ENCODE measurements at regions of chr6 and their contacts with region 1.

Region 1: GRCh38 chr6:30616811-30617564 is at the start of gene PPP1R10:
- DNase-seq: peak; percentile 95 to 100 (median 97)
- ATAC-seq: peak; percentile 76
- H3K4me3 ChIP-seq: peak within 1 kb of the TSS; percentile 91 to 96
- H3K4me3 Mint-ChIP-seq: peak within 1 kb of the TSS; percentile 100
- H3K27ac ChIP-seq: peak within 1 kb of the TSS; percentile 99 to 100
- H3K27ac Mint-ChIP-seq: peak within 1 kb of the TSS; percentile 100
- H3K4me1 ChIP-seq: peaks cover 43% of the 10 kb centered on the region
- H3K4me1 Mint-ChIP-seq: peaks cover 45% of the 10 kb centered on the region
- H3K27me3 ChIP-seq: no peaks in the 10 kb centered on the region
- H3K27me3 Mint-ChIP-seq: no peaks in the 10 kb centered on the region
- CTCF ChIP-seq: no peak
- total RNA-seq, gene PPP1R10: 85.5 to 95.4 TPM

Region 2: GRCh38 chr6:29737707-29738630 is 879.0 kb before region 1 on chr6:
- CTCF ChIA-PET with region 1: no interaction called
- POLR2A ChIA-PET with region 1: no interaction called
- intact Hi-C with region 1: no loop called
- DNase-seq: peak; percentile 45 to 87 (median 75)
- ATAC-seq: peak; percentile 89
- H3K4me3 ChIP-seq: no peak overlapping the region
- H3K4me3 Mint-ChIP-seq: no peak overlapping the region
- H3K27ac ChIP-seq: no peak overlapping the region
- H3K27ac Mint-ChIP-seq: no peak overlapping the region
- H3K4me1 ChIP-seq: no peaks in the 10 kb centered on the region
- H3K4me1 Mint-ChIP-seq: peaks cover 16% of the 10 kb centered on the region
- H3K27me3 ChIP-seq: no peaks in the 10 kb centered on the region
- H3K27me3 Mint-ChIP-seq: no peaks in the 10 kb centered on the region
- CTCF ChIP-seq: peak; percentile 67

Region 3: DNA sequence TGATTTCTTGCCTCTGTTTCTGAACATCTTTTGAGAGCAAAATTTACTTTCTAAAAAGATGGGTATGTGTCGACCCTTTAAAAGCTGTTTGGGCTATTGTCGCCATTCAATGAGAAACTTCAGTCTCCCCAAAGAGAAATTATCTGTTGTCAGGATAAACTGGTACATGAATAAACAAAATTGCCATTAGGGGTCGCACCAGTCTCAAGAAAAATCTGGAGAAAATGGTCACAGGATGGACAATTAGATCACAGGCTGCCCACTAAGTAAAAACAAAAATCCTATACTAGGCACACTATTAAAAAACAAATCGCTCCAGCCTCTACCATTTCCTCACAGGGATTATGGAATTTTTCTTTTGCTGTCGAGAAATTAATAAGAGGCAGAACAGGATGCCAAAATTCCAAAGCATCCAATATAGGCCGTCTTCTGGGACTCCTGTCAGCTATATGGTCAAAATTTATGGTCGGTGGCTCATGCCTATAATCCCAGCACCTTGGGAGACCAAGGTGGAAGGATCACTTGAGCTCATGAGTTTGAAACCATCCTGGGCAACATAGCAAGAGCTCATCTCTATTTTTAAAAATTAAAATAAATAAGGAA is 133.2 kb before region 1 on chr6:
- CTCF ChIA-PET with region 1: interaction called, 11 read pairs
- POLR2A ChIA-PET with region 1: interaction called, 6 read pairs
- intact Hi-C with region 1: no loop called
- DNase-seq: peak in 3 of 9 experiments; percentile 45 to 76 (median 68)
- ATAC-seq: no peak
- H3K4me3 ChIP-seq: no peak overlapping the region
- H3K4me3 Mint-ChIP-seq: no peak overlapping the region
- H3K27ac ChIP-seq: no peak overlapping the region
- H3K27ac Mint-ChIP-seq: no peak overlapping the region
- H3K4me1 ChIP-seq: peaks cover 21% of the 10 kb centered on the region
- H3K4me1 Mint-ChIP-seq: peaks cover 34% of the 10 kb centered on the region
- H3K27me3 ChIP-seq: peaks cover 10 to 19% of the 10 kb centered on the region in 2 experiments
- H3K27me3 Mint-ChIP-seq: peaks cover 27% of the 10 kb centered on the region
- CTCF ChIP-seq: peak; percentile 91

Region 4: GRCh38 chr6:30541515-30542403 is 75.2 kb before region 1 on chr6:
- CTCF ChIA-PET with region 1: interaction called, 25 read pairs
- POLR2A ChIA-PET with region 1: interaction called, 56 read pairs
- intact Hi-C with region 1: loop called in 1 of 2 experiments (anchors 1 kb)
- DNase-seq: peak; percentile 59 to 92 (median 82)
- ATAC-seq: peak; percentile 69
- H3K4me3 ChIP-seq: peak overlapping the region; percentile 42 to 66
- H3K4me3 Mint-ChIP-seq: peak overlapping the region; percentile 88
- H3K27ac ChIP-seq: peak overlapping the region; percentile 50 to 72
- H3K27ac Mint-ChIP-seq: peak overlapping the region; percentile 97
- H3K4me1 ChIP-seq: peaks cover 34% of the 10 kb centered on the region
- H3K4me1 Mint-ChIP-seq: peaks cover 34% of the 10 kb centered on the region
- H3K27me3 ChIP-seq: no peaks in the 10 kb centered on the region
- H3K27me3 Mint-ChIP-seq: no peaks in the 10 kb centered on the region
- CTCF ChIP-seq: peak; percentile 99

Region 5: DNA sequence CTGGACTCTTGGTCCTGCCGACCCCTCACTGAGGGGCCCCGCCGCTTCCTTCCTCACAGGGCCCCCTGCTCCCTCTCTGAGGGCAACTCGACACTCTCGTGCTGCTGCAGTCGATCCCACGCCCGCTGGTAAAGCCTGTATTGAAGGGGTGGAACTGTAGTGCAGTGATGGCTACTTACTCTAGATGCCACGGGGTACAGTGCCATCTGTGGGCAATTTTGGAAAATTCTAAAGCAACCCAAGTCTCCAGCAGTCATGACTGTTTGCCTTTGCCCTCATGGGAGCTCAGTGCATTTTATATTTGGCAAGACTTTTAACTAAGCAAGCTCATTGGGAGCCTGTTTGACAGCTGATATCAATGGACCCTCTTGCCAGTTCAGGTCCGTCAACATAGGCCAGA is 23.5 kb after region 1 on chr6:
- CTCF ChIA-PET with region 1: interaction called, 4 read pairs
- POLR2A ChIA-PET with region 1: interaction called, 17 read pairs
- intact Hi-C with region 1: no loop called
- DNase-seq: peak in 3 of 9 experiments; percentile 15 to 41 (median 25)
- ATAC-seq: peak; percentile 84
- H3K4me3 ChIP-seq: no peak overlapping the region
- H3K4me3 Mint-ChIP-seq: no peak overlapping the region
- H3K27ac ChIP-seq: peak overlapping the region in 1 of 2 experiments; percentile 3
- H3K27ac Mint-ChIP-seq: peak overlapping the region; percentile 69
- H3K4me1 ChIP-seq: peaks cover 22% of the 10 kb centered on the region
- H3K4me1 Mint-ChIP-seq: peaks cover 23% of the 10 kb centered on the region
- H3K27me3 ChIP-seq: no peaks in the 10 kb centered on the region
- H3K27me3 Mint-ChIP-seq: no peaks in the 10 kb centered on the region
- CTCF ChIP-seq: no peak

Region 6: GRCh38 chr6:30717042-30717844 is 100.3 kb after region 1 on chr6 and contains the start of gene MDC1:
- CTCF ChIA-PET with region 1: interaction called, 22 read pairs
- POLR2A ChIA-PET with region 1: interaction called, 33 read pairs
- intact Hi-C with region 1: loop called (anchors 1 kb)
- DNase-seq: peak; percentile 97 to 100 (median 98)
- ATAC-seq: peak; percentile 72
- H3K4me3 ChIP-seq: peak within 1 kb of the TSS; percentile 69 to 70
- H3K4me3 Mint-ChIP-seq: peak within 1 kb of the TSS; percentile 92
- H3K27ac ChIP-seq: peak within 1 kb of the TSS; percentile 83 to 90
- H3K27ac Mint-ChIP-seq: peak within 1 kb of the TSS; percentile 99
- H3K4me1 ChIP-seq: peaks cover 23% of the 10 kb centered on the region
- H3K4me1 Mint-ChIP-seq: peaks cover 51% of the 10 kb centered on the region
- H3K27me3 ChIP-seq: no peaks in the 10 kb centered on the region
- H3K27me3 Mint-ChIP-seq: no peaks in the 10 kb centered on the region
- CTCF ChIP-seq: peak; percentile 47
- total RNA-seq, gene MDC1: 38.9 to 48.8 TPM

Region 7: DNA sequence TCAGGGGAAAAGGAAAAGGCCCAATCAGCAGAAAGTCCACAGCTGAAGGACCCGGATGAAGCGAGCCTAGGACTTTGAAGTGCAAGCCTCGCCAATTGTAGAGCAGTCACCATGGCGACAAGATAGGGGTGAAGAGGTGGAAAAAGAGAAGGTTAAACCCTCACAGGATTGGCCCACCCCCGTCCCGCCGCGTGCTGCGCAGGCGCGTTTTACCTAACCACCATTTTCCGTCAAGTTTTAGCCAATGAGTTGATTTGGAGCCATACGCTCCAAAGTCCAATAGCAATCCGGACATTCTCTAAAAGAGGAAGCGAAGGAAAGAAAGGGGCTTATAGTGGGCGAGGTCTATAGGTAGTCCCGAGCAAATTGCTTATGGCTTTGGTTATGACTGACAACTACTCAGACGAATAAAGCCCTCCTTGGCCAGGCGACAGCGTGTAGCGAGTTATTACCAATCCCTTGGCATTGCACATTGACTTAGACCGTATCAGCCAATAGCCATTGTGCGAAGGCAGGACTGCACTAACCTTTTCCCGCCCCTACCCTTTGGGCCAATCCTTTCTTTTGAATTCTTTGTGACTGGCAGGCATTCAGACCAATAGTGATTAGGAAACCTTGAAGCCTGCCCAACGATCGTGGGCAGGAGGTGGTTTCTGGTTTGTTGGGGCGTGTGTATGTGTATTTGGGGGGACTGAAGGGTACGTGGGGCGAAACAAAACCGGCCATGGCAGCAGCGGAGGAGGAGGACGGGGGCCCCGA is 1561.0 kb after region 1 on chr6 and contains the start of gene RNF5:
- CTCF ChIA-PET with region 1: no interaction called
- POLR2A ChIA-PET with region 1: no interaction called
- intact Hi-C with region 1: loop called in 1 of 2 experiments (anchors 5 kb)
- DNase-seq: peak; percentile 84 to 100 (median 93)
- ATAC-seq: peak; percentile 83
- H3K4me3 ChIP-seq: peak within 1 kb of the TSS; percentile 72 to 82
- H3K4me3 Mint-ChIP-seq: peak within 1 kb of the TSS; percentile 93
- H3K27ac ChIP-seq: peak within 1 kb of the TSS; percentile 89 to 98
- H3K27ac Mint-ChIP-seq: peak within 1 kb of the TSS; percentile 96
- H3K4me1 ChIP-seq: peaks cover 59% of the 10 kb centered on the region
- H3K4me1 Mint-ChIP-seq: peaks cover 69% of the 10 kb centered on the region
- H3K27me3 ChIP-seq: no peaks in the 10 kb centered on the region
- H3K27me3 Mint-ChIP-seq: no peaks in the 10 kb centered on the region
- CTCF ChIP-seq: no peak
- total RNA-seq, gene RNF5: 10.0 to 11.5 TPM